Activated CD4-positive, alpha-beta memory T cell treated with anti-CD3 and anti-CD28 coated beads for 36 hours (primary cell): ENCODE measurements at regions of chr20 and their contacts with region 1.

Region 1: GRCh38 chr20:3218307-3218988 is 9.2 kb downstream of the ITPA start:
- DNase-seq: peak; percentile 83
- H3K4me3 Mint-ChIP-seq: no peak overlapping the region
- H3K27ac Mint-ChIP-seq: no peak overlapping the region
- H3K4me1 Mint-ChIP-seq: peaks cover 8% of the 10 kb centered on the region
- H3K27me3 Mint-ChIP-seq: no peaks in the 10 kb centered on the region

Region 2: DNA sequence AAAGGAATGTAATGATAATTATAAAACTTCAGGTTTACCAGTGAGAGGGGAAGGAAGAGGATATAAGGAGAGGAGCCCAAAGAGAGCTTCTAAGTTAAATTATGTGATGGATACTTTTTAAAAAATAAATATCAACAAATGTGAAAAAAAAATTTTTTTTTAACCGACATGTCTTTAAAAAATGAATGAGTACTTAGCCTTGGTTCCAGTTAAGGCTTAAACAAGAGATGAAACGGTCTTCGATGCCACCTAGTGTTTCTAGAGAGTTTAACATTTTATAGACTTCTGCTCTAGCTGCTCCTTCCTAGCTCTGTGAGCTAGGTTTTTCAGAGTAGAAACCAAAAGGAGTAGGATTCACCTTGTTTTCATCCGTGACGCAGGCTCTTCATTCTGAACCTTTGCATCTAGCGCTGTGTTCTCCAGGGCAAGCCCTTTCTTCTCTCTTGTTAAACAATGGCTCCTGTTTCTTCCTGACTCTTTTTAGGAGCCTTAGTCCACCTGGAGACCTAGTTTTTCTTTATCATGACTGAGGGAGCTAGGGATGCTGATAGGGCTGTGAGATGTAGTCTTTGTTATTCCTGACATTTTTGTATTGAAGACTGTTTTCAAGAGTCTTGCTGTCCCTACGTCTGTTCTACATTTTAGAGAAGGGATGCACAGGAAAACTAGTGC is 217.5 kb before region 1 on chr20:
- CTCF ChIA-PET with region 1: no interaction called
- POLR2A ChIA-PET with region 1: no interaction called
- intact Hi-C with region 1: no loop called
- DNase-seq: no peak
- H3K4me3 Mint-ChIP-seq: no peak overlapping the region
- H3K27ac Mint-ChIP-seq: peak overlapping the region; percentile 51
- H3K4me1 Mint-ChIP-seq: peaks cover 9% of the 10 kb centered on the region
- H3K27me3 Mint-ChIP-seq: no peaks in the 10 kb centered on the region

Region 3: DNA sequence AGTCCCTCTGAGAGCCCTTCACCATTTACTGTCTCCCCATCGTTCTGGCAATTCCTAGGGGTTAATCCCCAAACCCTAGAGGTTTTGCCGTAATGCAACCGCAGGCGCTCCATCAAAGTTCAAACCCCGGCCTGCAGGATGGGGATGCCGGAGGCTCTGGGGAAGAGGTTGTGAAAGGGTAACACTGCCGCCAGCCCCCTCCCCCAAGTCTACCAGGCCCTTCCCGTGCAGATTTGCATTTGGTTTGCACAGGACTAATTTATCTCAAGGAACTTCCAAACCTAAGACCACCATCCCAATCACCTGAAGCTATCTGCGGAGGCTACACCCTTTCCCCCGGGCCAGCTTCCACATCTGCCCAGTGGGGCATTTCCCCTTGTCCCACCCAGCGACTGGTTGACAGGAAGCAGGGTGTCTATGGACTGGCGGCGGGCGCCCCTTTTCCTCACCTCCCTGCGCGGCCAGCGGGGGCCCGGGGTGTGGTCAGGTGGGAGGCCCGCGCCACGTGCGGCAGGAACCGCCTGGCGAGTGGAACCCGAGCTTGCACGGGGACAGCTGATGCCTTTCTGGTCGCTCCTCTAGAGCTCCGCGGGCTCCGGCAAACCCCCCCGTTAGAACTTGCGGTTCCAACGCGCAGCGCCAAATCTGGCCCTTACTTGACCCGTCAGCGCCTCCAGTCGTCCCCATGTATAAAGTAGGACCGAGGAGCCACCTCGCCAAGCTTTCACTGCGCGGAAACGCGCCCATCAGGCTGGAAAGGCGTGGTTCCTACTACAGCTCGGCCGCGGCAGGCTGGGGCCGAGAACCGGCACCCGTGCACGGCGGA is 29.9 kb after region 1 on chr20:
- CTCF ChIA-PET with region 1: interaction called, 14 read pairs
- POLR2A ChIA-PET with region 1: no interaction called
- intact Hi-C with region 1: no loop called
- DNase-seq: peak; percentile 46
- H3K4me3 Mint-ChIP-seq: peak overlapping the region; percentile 16
- H3K27ac Mint-ChIP-seq: no peak overlapping the region
- H3K4me1 Mint-ChIP-seq: peaks cover 2% of the 10 kb centered on the region
- H3K27me3 Mint-ChIP-seq: peaks cover 19% of the 10 kb centered on the region

Region 4: DNA sequence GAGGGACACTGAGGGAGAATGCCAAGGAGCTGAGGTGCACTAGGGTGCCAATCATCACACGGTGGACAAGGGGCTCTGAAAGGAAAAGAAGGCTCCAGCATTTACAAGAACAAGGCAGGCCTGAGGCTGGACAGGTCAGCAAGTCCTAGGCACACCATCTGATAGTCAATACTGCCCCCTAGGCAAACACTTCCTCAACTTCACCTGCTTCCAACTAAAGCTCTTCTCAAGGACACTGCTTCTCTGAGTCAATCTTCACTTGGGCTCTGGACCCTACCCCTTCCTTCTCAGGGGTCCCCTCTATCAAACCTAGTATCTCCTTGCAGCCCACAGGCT is 58.2 kb after region 1 on chr20:
- CTCF ChIA-PET with region 1: interaction called, 10 read pairs
- POLR2A ChIA-PET with region 1: no interaction called
- intact Hi-C with region 1: loop called (anchors 2 kb)
- DNase-seq: no peak
- H3K4me3 Mint-ChIP-seq: no peak overlapping the region
- H3K27ac Mint-ChIP-seq: no peak overlapping the region
- H3K4me1 Mint-ChIP-seq: no peaks in the 10 kb centered on the region
- H3K27me3 Mint-ChIP-seq: no peaks in the 10 kb centered on the region

Region 5: GRCh38 chr20:3316136-3316535 is 97.7 kb after region 1 on chr20:
- CTCF ChIA-PET with region 1: interaction called, 34 read pairs
- POLR2A ChIA-PET with region 1: no interaction called
- intact Hi-C with region 1: loop called (anchors 1 kb)
- DNase-seq: no peak
- H3K4me3 Mint-ChIP-seq: no peak overlapping the region
- H3K27ac Mint-ChIP-seq: no peak overlapping the region
- H3K4me1 Mint-ChIP-seq: no peaks in the 10 kb centered on the region
- H3K27me3 Mint-ChIP-seq: no peaks in the 10 kb centered on the region